ENCODE measurements at regions of chr4 and their contacts with region 1.

Region 1: DNA sequence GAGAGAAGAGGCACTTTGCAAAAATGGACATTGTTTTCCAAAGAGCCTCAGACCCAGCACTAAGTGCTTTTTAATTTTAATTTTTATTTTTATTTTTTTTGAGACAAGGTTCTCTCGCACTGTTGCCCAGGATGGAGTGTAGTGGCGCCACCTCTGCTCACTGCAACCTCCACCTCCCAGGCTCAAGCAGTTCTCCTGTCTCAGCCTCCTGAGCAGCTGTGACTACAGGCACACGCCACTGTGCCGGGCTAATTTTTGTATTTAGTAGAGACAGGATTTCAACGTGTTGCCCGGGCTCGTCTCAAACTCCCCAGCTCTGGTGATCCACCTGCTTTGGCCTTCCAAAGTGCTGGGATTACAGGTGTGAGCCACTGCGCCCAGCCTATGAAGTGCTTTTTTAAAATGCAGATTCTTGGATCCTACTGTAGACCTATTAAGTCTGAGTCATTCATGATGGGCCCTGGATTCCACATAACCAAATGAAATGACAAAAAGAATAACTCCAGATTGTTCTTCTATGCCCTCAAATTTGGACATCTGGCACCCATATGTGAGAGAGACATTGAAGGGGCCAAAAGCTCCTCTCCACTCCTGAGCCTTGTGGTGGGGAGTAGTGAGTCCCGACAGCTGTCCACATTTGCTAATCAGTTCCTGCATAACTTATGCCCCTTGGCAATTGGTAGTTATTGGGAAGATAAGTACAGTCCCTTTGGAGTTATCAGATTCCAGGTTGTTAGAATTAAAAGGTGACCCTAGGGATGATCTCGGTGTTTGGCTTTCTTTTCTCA is 3.6 kb downstream of the NOCT start:
- DNase-seq: no peak
- H3K4me3 ChIP-seq: no peak overlapping the region
- H3K27ac ChIP-seq: peak overlapping the region; percentile 4
- H3K4me1 ChIP-seq: peaks cover 41% of the 10 kb centered on the region
- H3K27me3 ChIP-seq: no peaks in the 10 kb centered on the region
- CTCF ChIP-seq: no peak

Region 2: GRCh38 chr4:139030614-139031235 is 11.6 kb after region 1 on chr4:
- CTCF ChIA-PET with region 1: interaction called, 17 read pairs
- POLR2A ChIA-PET with region 1: interaction called, 3 read pairs
- intact Hi-C with region 1: no loop called
- DNase-seq: peak; percentile 86
- H3K4me3 ChIP-seq: no peak overlapping the region
- H3K27ac ChIP-seq: no peak overlapping the region
- H3K4me1 ChIP-seq: peaks cover 3% of the 10 kb centered on the region
- H3K27me3 ChIP-seq: no peaks in the 10 kb centered on the region
- CTCF ChIP-seq: peak; percentile 91

Region 3: GRCh38 chr4:139229534-139230039 is 210.4 kb after region 1 on chr4:
- CTCF ChIA-PET with region 1: no interaction called
- POLR2A ChIA-PET with region 1: no interaction called
- intact Hi-C with region 1: no loop called
- DNase-seq: peak; percentile 78
- H3K4me3 ChIP-seq: no peak overlapping the region
- H3K27ac ChIP-seq: no peak overlapping the region
- H3K4me1 ChIP-seq: peaks cover 17% of the 10 kb centered on the region
- H3K27me3 ChIP-seq: no peaks in the 10 kb centered on the region
- CTCF ChIP-seq: peak; percentile 82

Measured in A673 (cell line).